K562 (cell line): ENCODE measurements at regions of chr13 and their contacts with region 1.

Region 1: DNA sequence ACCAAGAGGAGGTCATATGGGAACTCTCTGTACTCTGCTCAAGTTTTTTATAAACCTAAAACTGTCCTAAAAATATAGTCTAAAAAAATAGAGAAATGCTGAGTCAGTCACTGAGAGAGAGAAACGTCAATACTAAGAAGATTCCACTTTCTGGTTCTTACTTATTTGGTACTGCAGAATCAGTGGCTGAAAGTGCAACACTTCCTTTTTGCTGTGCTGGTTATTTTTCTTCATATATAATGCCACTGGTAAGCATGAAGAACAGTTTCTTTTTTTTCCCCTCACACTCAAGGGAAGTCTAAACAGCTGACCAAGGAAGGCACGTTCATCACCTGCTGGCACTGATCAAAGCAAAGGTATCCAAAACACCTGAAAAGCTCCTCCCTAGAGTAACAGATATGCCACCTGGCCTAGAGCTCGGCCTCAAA is 44.3 kb upstream of the N4BP2L1 start:
- DNase-seq: no peak
- ATAC-seq: no peak
- H3K4me3 ChIP-seq: no peak overlapping the region
- H3K27ac ChIP-seq: peak overlapping the region; percentile 44; the same call in 1 of the 3 replicates
- H3K4me1 ChIP-seq: peaks cover 16 to 34% of the 10 kb centered on the region in 2 experiments; a peak in 4 of 5 replicates
- H3K27me3 ChIP-seq: no peaks in the 10 kb centered on the region
- CTCF ChIP-seq: no peak
- EP300 ChIP-seq: no peak
- POLR2A ChIP-seq: no peak
- RAD21 ChIP-seq: no peak

Region 2: GRCh38 chr13:32538621-32539246 is 66.5 kb after region 1 on chr13 and contains the start of gene N4BP2L2:
- CTCF ChIA-PET with region 1: no interaction called
- POLR2A ChIA-PET with region 1: interaction called, 7 read pairs
- in situ Hi-C with region 1: no loop called
- intact Hi-C with region 1: loop called (anchors 2 kb)
- DNase-seq: peak; percentile 71 to 95 (median 77)
- ATAC-seq: peak; percentile 98
- H3K4me3 ChIP-seq: peak within 1 kb of the TSS; percentile 82
- H3K27ac ChIP-seq: peak within 1 kb of the TSS; percentile 90
- H3K4me1 ChIP-seq: peaks cover 0 to 7% of the 10 kb centered on the region in 2 experiments; a peak in 2 of 5 replicates
- H3K27me3 ChIP-seq: no peaks in the 10 kb centered on the region
- CTCF ChIP-seq: peak; percentile 58 to 72 (median 63)
- EP300 ChIP-seq: 0 out of 2 replicates have a peak, but pooled peaks have one; percentile 38
- POLR2A ChIP-seq: peak; percentile 84
- RAD21 ChIP-seq: peak; percentile 20 to 51; a peak in 3 of 4 replicates
- polyA plus RNA-seq, gene N4BP2L2: 46.2 to 46.5 TPM

Region 3: DNA sequence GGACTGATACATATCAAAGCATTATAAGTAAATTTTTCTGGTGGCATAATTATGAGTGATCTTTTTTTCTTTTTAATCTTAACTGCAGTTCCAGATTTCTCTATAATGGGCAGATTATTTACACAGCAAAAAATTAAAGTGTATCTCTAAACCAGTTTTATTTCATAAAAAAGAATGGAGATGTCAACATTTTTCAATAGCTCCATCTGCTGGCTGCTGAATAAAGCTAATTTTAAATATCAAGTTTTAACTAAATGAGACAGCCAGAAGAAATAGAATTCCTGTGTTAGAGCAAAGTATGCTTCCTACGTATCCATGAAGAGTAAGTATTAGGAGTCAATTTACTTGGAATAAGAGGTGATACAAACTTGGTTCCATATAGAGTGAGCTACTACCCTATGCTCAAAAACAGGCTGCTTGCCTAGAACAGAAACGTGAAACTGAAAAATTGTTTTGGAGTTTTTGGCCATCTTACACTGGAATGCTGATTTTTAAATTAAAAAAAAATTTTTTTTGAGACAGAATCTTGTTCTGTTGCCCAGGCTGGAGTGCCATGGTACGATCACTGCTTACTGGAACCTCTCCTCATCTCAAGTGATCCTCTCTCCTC is 109.1 kb after region 1 on chr13:
- CTCF ChIA-PET with region 1: no interaction called
- POLR2A ChIA-PET with region 1: no interaction called
- in situ Hi-C with region 1: no loop called
- intact Hi-C with region 1: loop called (anchors 2 kb)
- DNase-seq: peak in 1 of 4 experiments; percentile 11
- ATAC-seq: no peak
- H3K4me3 ChIP-seq: no peak overlapping the region
- H3K27ac ChIP-seq: no peak overlapping the region
- H3K4me1 ChIP-seq: peaks cover 2 to 4% of the 10 kb centered on the region in 2 experiments; a peak in 3 of 5 replicates
- H3K27me3 ChIP-seq: no peaks in the 10 kb centered on the region
- CTCF ChIP-seq: peak; percentile 17 to 57 (median 25); a peak in 3 of 6 replicates
- EP300 ChIP-seq: no peak
- POLR2A ChIP-seq: no peak
- RAD21 ChIP-seq: peak; percentile 18 to 58; a peak in 3 of 4 replicates